CD4-positive, alpha-beta memory T cell (primary cell): ENCODE measurements at regions of chr6 and their contacts with region 1.

Region 1: GRCh38 chr6:143999406-143999805 is 8.7 kb downstream of the PLAGL1 start:
- DNase-seq: no peak
- H3K4me3 ChIP-seq: no peak overlapping the region
- H3K4me3 Mint-ChIP-seq: no peak overlapping the region
- H3K27ac ChIP-seq: no peak overlapping the region
- H3K27ac Mint-ChIP-seq: no peak overlapping the region
- H3K4me1 ChIP-seq: no peaks in the 10 kb centered on the region
- H3K4me1 Mint-ChIP-seq: no peaks in the 10 kb centered on the region
- H3K27me3 ChIP-seq: no peaks in the 10 kb centered on the region
- H3K27me3 Mint-ChIP-seq: peaks cover 4% of the 10 kb centered on the region in 2 donors

Region 2: DNA sequence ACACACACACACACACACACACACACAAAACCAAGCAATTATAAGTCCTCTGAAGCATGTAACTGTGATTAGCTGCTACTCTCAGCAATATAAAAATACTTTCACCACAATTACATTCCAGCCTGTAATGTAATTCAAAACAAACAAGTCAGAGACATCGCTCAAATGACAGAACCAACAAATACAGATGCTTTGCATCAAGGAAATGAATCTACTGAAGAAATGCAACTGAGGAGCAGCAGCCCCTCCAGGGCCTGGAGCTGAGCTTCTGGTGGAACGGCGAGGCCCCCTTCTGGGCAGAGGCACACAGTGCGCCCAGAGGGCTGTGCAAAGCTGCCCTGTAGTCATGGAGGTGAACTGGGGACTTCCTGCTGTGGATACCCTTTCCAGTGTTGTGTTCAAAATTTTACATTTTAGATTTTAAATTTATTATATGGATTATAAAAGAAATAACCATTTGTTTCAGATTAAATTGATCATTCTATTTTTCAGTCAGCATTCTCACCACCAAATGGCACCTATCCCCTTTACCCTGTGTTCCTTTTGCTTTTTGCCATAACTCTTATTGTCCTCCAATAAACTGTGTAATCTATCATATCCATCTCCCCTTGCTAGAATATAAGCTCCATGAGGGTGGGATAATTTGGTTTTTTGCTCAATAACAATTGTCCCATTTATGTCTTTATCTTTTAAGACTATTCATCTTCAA is 572.1 kb before region 1 on chr6:
- CTCF ChIA-PET with region 1: no interaction called
- POLR2A ChIA-PET with region 1: no interaction called
- intact Hi-C with region 1: no loop called
- DNase-seq: peak; percentile 65 to 73 (median 70)
- H3K4me3 ChIP-seq: no peak overlapping the region
- H3K4me3 Mint-ChIP-seq: no peak overlapping the region
- H3K27ac ChIP-seq: no peak overlapping the region
- H3K27ac Mint-ChIP-seq: peak overlapping the region in 2 of 7 donors; percentile 15 to 81
- H3K4me1 ChIP-seq: no peaks in the 10 kb centered on the region
- H3K4me1 Mint-ChIP-seq: no peaks in the 10 kb centered on the region
- H3K27me3 ChIP-seq: no peaks in the 10 kb centered on the region
- H3K27me3 Mint-ChIP-seq: no peaks in the 10 kb centered on the region

Region 3: DNA sequence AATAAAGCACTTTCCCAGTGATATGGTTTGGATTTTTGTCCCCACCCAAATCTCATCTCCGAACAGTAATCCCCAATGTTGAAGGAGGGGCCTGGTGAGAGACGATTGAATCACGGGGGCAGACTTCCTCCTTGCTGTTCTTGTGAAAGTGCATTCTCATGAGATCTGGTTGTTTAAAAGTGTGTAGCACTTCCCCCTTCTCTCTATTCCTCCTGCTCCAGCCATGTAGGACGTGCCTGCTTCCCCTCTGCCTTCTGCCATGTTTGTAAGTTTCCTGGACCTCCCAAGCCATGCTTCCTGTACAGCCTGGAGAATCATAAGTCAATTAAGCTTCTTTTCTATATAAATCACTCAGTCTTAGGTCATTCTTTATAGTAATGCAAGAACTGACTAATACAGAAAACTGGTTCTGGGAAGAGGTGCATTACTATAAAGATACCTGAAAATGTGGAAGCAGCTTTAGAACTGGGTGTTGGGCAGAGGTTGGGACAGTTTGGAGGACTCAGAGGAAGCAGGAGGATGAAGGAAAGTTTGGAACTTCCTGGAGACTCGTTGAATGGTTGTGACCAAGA is 1728.5 kb after region 1 on chr6:
- CTCF ChIA-PET with region 1: no interaction called
- POLR2A ChIA-PET with region 1: no interaction called
- intact Hi-C with region 1: loop called (anchors 10 kb)
- DNase-seq: no peak
- H3K4me3 ChIP-seq: no peak overlapping the region
- H3K4me3 Mint-ChIP-seq: no peak overlapping the region
- H3K27ac ChIP-seq: no peak overlapping the region
- H3K27ac Mint-ChIP-seq: no peak overlapping the region
- H3K4me1 ChIP-seq: no peaks in the 10 kb centered on the region
- H3K4me1 Mint-ChIP-seq: peaks cover 0 to 7% (median 0%) of the 10 kb centered on the region in 4 donors
- H3K27me3 ChIP-seq: no peaks in the 10 kb centered on the region
- H3K27me3 Mint-ChIP-seq: no peaks in the 10 kb centered on the region